ENCODE measurements at regions of chr12 and their contacts with region 1.

Region 1: GRCh38 chr12:5022465-5023061 is 21.1 kb upstream of the KCNA5 start:
- DNase-seq: no peak
- H3K4me3 ChIP-seq: no peak overlapping the region
- H3K27ac ChIP-seq: no peak overlapping the region
- H3K4me1 ChIP-seq: no peaks in the 10 kb centered on the region
- H3K27me3 ChIP-seq: peaks cover 0 to 24% (median 0%) of the 10 kb centered on the region in 4 donors
- CTCF ChIP-seq: peak; percentile 84 to 93 (median 88)
- EP300 ChIP-seq: no peak
- POLR2A ChIP-seq: no peak

Region 2: GRCh38 chr12:4843907-4844306 is 178.7 kb before region 1 on chr12:
- intact Hi-C with region 1: no loop called
- DNase-seq: no peak
- H3K4me3 ChIP-seq: no peak overlapping the region
- H3K27ac ChIP-seq: no peak overlapping the region
- H3K4me1 ChIP-seq: no peaks in the 10 kb centered on the region
- H3K27me3 ChIP-seq: peaks cover 0 to 5% (median 0%) of the 10 kb centered on the region in 4 donors
- CTCF ChIP-seq: no peak
- EP300 ChIP-seq: no peak
- POLR2A ChIP-seq: no peak

Region 3: DNA sequence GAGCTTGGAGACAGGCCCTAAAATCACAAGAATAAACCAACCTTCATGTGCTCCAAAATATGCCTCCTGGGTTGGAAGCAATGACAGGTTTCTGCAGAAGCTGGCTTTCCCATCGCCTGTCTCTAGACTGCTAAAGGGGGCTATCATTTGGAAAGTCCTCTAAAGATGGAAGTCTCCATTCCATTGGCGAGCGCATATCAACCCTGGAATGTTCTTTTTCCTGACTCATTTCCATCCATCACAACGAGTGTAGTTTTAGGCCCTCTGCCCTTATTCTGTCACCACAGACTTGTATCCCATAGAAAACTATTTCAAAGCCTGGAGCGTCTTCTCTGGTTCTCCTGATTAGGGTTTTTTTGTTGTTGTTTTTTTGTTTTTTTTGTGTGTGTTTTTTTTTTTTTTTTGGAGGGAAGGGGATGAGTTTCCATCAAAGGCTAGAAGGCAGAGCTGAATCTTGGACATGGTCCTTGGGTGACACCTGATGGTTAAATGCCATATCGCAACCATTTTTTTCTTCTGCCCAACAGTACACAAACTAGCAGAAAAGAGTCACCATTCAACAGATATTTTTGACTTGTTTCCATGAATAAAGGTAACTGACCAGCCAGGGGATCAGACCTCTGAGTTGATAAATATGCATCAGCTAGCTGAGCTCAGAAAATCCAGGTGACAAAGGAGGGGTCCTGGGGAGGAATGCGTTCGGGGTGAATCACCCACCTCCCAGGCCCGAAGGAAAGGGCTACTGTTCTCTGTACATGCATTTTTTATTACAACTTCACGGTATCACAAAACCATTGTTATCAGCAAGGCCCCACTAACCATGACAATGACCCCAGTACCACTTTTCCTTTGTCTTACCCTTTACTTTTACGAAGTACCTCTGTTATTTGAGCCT is 61.6 kb after region 1 on chr12:
- intact Hi-C with region 1: loop called (anchors 1 kb)
- DNase-seq: no peak
- H3K4me3 ChIP-seq: no peak overlapping the region
- H3K27ac ChIP-seq: no peak overlapping the region
- H3K4me1 ChIP-seq: peaks cover 0 to 1% (median under 1%) of the 10 kb centered on the region in 4 donors
- H3K27me3 ChIP-seq: peaks cover 0 to 12% (median 0%) of the 10 kb centered on the region in 4 donors
- CTCF ChIP-seq: peak; percentile 61 to 72 (median 67)
- EP300 ChIP-seq: no peak
- POLR2A ChIP-seq: no peak